ENCODE measurements at regions of chr19 and their contacts with region 1.

Region 1: DNA sequence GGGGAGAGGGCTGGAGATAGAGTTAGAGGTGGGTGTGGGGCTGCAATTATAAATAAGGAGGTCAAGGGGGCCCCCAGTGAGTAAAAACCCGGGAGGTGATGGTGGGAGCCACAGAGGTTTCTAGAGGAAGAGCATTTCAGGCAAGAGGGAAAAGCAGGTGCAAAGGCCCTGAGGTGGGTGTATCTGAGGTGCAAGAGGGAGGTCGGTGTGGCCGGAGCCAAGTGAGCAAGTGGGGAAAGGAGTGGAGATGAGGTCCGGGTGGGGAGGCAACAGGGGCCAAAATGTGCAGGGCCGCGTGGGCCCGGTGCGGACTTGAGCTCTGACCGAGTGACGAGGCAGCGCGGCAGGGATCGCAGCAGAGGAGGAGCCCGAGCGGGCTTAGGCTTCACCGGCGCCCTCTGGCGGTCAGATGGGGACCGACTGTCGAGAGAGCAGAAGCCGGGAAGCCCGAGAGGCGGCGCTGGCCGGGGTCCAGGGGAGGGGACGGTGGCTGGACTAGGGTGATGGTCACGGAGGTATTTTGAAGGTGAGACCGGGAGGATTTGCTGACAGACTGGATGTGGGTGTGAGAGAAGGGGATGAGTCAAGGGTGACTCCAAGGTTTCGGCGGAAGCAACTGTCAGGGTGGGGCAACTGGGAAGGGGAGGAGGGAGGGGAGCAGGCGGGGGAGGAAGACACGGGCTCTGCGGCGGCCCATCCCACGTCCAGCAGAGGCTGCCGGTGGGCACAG is 17.7 kb upstream of the SPACA4 start:
- DNase-seq: peak; percentile 90 to 93
- ATAC-seq: peak; percentile 84 to 85
- H3K4me3 ChIP-seq: peak overlapping the region; percentile 27
- H3K27ac ChIP-seq: peak overlapping the region; percentile 58 to 85
- H3K4me1 ChIP-seq: peaks cover 9% of the 10 kb centered on the region
- CTCF ChIP-seq: peak; percentile 99
- EP300 ChIP-seq: peak in 1 of 2 experiments; percentile 31; a peak in 1 of 5 replicates
- POLR2A ChIP-seq: no peak
- RAD21 ChIP-seq: peak; percentile 78 to 87

Region 2: GRCh38 chr19:48351341-48351752 is 237.5 kb before region 1 on chr19:
- CTCF ChIA-PET with region 1: interaction called, 12 read pairs
- POLR2A ChIA-PET with region 1: no interaction called
- DNase-seq: peak; percentile 82 to 89
- ATAC-seq: peak; percentile 76 to 83
- H3K4me3 ChIP-seq: no peak overlapping the region
- H3K27ac ChIP-seq: peak overlapping the region in 1 of 2 experiments; percentile 74; a peak in 3 of 6 replicates
- H3K4me1 ChIP-seq: peaks cover 29% of the 10 kb centered on the region
- CTCF ChIP-seq: peak; percentile 90
- EP300 ChIP-seq: no peak
- POLR2A ChIP-seq: no peak
- RAD21 ChIP-seq: peak; percentile 73

Region 3: GRCh38 chr19:48469289-48469881 is 119.5 kb before region 1 on chr19 and contains the start of gene CYTH2:
- CTCF ChIA-PET with region 1: interaction called, 19 read pairs
- POLR2A ChIA-PET with region 1: no interaction called
- DNase-seq: peak; percentile 70 to 84
- ATAC-seq: peak; percentile 62 to 82
- H3K4me3 ChIP-seq: peak within 1 kb of the TSS; percentile 82
- H3K27ac ChIP-seq: peak within 1 kb of the TSS; percentile 94 to 96
- H3K4me1 ChIP-seq: peaks cover 24% of the 10 kb centered on the region
- CTCF ChIP-seq: no peak
- EP300 ChIP-seq: no peak
- POLR2A ChIP-seq: peak; percentile 81
- RAD21 ChIP-seq: no peak; a peak in 2 of 5 replicates
- polyA plus RNA-seq, gene CYTH2: 33.4 and 36.9 TPM in 2 replicates

Region 4: DNA sequence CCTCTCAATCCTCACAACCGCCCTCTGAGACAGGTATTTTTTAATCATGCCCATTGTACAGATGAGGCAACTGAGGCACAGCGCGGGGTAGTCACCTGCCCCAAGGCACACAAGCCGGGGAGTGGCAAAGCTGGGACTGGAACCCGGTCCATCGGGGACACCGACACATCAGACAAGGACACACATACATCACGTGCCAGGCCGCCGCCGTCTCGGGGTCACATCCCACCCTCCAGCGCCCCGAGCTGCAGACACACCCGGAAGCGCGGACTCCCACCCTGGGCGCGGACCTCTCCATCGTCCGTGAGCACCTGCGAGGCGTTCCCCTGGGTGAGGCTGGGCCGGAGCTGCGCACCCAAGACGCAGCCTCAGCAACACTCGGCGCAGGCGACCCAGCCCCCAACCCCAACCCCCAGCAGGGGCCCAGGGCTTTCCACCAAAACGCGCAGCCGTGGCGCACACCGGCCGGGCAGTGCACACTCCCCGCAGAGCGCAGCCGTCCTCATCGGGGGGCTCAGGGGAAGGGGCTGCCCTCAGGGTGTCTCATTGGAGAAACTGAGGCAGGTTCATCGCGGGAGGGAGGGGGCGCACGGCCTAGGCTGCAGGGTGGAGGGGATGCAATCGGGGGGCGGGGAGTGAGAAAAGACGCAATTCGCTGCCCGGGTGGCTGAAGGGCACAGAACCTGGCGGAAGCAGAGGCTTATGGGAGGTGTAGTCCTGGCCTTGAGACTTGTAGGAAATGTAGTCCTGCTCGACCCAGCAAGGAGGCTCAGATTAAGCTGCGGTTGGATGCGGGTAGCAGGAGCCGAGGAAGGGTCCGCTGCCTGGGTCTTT is 75.3 kb before region 1 on chr19:
- CTCF ChIA-PET with region 1: interaction called, 618 read pairs
- POLR2A ChIA-PET with region 1: interaction called, 40 read pairs
- DNase-seq: peak; percentile 92 to 94
- ATAC-seq: peak; percentile 76 to 86
- H3K4me3 ChIP-seq: peak overlapping the region; percentile 59
- H3K27ac ChIP-seq: peak overlapping the region; percentile 92 to 93
- H3K4me1 ChIP-seq: peaks cover 34% of the 10 kb centered on the region
- CTCF ChIP-seq: no peak
- EP300 ChIP-seq: no peak
- POLR2A ChIP-seq: peak; percentile 48
- RAD21 ChIP-seq: peak; percentile 2 to 45; a peak in 4 of 5 replicates

Region 5: GRCh38 chr19:48553676-48554386 is 35.0 kb before region 1 on chr19:
- CTCF ChIA-PET with region 1: interaction called, 79 read pairs
- POLR2A ChIA-PET with region 1: interaction called, 15 read pairs
- DNase-seq: peak; percentile 94 to 99
- ATAC-seq: peak; percentile 64 to 74
- H3K4me3 ChIP-seq: no peak overlapping the region
- H3K27ac ChIP-seq: peak overlapping the region; percentile 97 to 100
- H3K4me1 ChIP-seq: peaks cover 72% of the 10 kb centered on the region
- CTCF ChIP-seq: no peak; the same call in 2 of the 3 replicates
- EP300 ChIP-seq: peak; percentile 91 to 98; a peak in 3 of 5 replicates
- POLR2A ChIP-seq: no peak
- RAD21 ChIP-seq: peak in 1 of 2 experiments; percentile 71; a peak in 4 of 5 replicates

Region 6: DNA sequence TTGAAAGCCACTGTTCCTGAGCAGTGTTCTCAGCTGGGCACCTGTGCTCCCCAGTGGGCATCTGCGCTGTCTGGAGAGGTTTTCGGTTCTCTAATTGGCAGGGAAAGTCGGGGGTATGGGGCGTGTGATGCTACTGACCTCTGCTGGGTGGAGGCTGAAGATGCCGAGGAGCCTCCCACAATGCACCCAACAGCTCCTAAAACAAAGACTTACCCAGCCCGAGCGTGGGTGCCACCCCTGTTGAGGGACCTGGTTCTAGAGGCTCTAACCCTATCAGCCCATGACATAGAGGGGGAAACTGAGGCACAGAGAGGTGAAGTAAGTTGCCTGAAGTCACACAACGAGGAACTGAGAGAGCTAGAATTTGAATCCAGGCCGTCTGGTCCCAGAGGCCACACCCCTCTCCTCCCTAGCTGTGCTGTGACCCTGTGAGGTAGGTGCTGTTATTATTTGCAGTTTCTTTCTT is 20.0 kb after region 1 on chr19:
- CTCF ChIA-PET with region 1: interaction called, 396 read pairs
- POLR2A ChIA-PET with region 1: interaction called, 8 read pairs
- DNase-seq: peak; percentile 83 to 88
- ATAC-seq: peak; percentile 75 to 82
- H3K4me3 ChIP-seq: no peak overlapping the region
- H3K27ac ChIP-seq: peak overlapping the region; percentile 65 to 78
- H3K4me1 ChIP-seq: peaks cover 5% of the 10 kb centered on the region; the same call in 1 of the 3 replicates
- CTCF ChIP-seq: peak; percentile 92
- EP300 ChIP-seq: no peak
- POLR2A ChIP-seq: no peak
- RAD21 ChIP-seq: peak; percentile 94 to 98

Measured in A549 (cell line).